ENCODE measurements at regions of chr17 and their contacts with region 1.

Region 1: GRCh38 chr17:29283271-29283895 is 10.6 kb downstream of the NUFIP2 start:
- DNase-seq: no peak
- ATAC-seq: no peak
- H3K4me3 ChIP-seq: no peak overlapping the region
- H3K27ac ChIP-seq: no peak overlapping the region
- H3K4me1 ChIP-seq: peaks cover 9 to 83% (median 68%) of the 10 kb centered on the region in 9 donors
- H3K27me3 ChIP-seq: no peaks in the 10 kb centered on the region
- CTCF ChIP-seq: peak in 4 of 9 donors; percentile 6 to 27 (median 10)

Region 2: GRCh38 chr17:29155227-29155965 is 128.0 kb before region 1 on chr17:
- intact Hi-C with region 1: loop called in 1 of 10 experiments (anchors 10 kb)
- DNase-seq: no peak
- ATAC-seq: peak; percentile 56 to 81 (median 74)
- H3K4me3 ChIP-seq: peak overlapping the region in 1 of 10 donors; percentile 7
- H3K27ac ChIP-seq: peak overlapping the region; percentile 25 to 89 (median 80)
- H3K4me1 ChIP-seq: peaks cover 20 to 84% (median 68%) of the 10 kb centered on the region in 9 donors
- H3K27me3 ChIP-seq: no peaks in the 10 kb centered on the region
- CTCF ChIP-seq: no peak

Region 3: DNA sequence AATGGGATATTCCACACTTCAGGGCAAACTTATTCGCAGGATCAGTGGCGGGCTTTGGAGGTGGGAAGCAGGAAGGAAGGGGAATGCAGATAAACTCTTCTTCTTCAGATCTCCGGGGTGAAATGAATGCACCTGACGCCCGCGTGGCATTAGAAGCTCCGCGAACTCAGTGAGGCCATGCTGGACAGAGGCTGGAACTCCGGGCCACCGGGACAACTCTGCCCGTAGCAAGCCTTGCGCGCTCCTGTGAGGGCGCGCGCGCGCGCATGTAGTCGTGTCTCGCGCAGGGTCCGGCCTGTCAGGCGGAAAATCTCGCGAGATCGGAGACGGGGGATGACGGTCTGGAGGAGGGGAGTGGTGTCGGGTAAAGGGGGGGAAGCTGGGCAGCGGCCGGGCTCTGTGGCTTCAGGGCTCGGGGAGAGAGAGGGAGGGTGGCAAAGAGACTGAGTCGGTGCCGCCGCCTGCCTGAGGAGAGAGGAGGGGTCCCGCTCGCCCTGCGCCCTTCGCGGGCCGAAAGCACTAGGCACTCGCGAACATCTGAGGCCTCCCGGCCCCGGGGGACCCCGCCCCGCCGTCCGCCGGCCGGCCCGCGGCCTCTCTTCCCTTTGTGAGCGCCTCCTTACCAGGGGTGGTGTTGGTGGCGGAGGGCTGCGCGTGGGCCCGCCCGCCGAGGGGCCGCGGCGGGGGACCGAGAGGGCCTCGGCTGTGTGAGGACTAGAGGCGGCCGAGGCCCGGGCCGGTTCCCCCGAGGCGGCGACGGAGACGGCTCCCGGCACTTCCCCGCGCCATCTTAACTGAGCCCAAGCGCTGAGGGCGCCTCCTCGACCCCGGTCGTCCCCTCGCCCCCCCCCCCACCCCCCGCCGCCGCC is 106.8 kb after region 1 on chr17 and contains the start of gene TAOK1:
- intact Hi-C with region 1: no loop called
- DNase-seq: peak; percentile 99 to 100
- ATAC-seq: peak; percentile 98 to 100 (median 99)
- H3K4me3 ChIP-seq: peak within 1 kb of the TSS; percentile 73 to 99 (median 88)
- H3K27ac ChIP-seq: peak within 1 kb of the TSS; percentile 96 to 99 (median 98)
- H3K4me1 ChIP-seq: peaks cover 4 to 53% (median 32%) of the 10 kb centered on the region in 9 donors
- H3K27me3 ChIP-seq: no peaks in the 10 kb centered on the region
- CTCF ChIP-seq: no peak
- total RNA-seq, gene TAOK1: 49.6 to 86.9 (median 70.7) TPM

Measured in heart right ventricle (tissue), 16 donors.